Colonic mucosa (tissue), 4 donors: ENCODE measurements at regions of chr14 and their contacts with region 1.

Region 1: GRCh38 chr14:95527387-95528002 is 7.4 kb upstream of the GLRX5 start:
- DNase-seq: peak; percentile 76
- H3K4me3 ChIP-seq: no peak overlapping the region
- H3K27ac ChIP-seq: peak overlapping the region; percentile 19
- H3K4me1 ChIP-seq: peaks cover 11% of the 10 kb centered on the region
- H3K27me3 ChIP-seq: no peaks in the 10 kb centered on the region
- CTCF ChIP-seq: peak; percentile 86

Region 2: DNA sequence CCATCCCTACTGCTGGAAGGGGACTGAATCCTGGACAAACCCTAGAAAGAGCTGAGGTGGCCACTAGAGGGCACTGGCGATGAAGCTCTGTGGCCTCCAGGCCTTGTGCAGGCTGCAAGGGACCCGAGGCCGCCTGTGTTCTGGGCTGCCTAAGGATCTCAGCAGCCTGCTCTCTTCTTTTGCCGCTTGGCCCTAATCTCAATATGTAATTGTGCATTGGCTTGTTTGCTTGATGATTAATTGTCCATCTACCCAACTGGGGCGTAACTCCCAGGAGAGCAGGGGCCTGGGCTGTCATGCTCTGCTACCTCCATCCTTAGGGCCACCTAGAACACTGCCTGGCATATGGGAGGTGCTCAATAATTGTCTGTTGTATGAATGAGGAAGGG is 84.9 kb before region 1 on chr14:
- intact Hi-C with region 1: loop called (anchors 2 kb)
- DNase-seq: peak; percentile 88
- H3K4me3 ChIP-seq: no peak overlapping the region
- H3K27ac ChIP-seq: no peak overlapping the region
- H3K4me1 ChIP-seq: no peaks in the 10 kb centered on the region
- H3K27me3 ChIP-seq: no peaks in the 10 kb centered on the region
- CTCF ChIP-seq: peak; percentile 80